Caco-2 (cell line): ENCODE measurements at regions of chr6 and their contacts with region 1.

Region 1: GRCh38 chr6:132300323-132300949 is 100.8 kb downstream of the MOXD1 start:
- DNase-seq: peak in 1 of 2 experiments; percentile 49
- H3K4me3 ChIP-seq: no peak overlapping the region
- H3K4me3 Mint-ChIP-seq: no peak overlapping the region
- H3K27ac Mint-ChIP-seq: no peak overlapping the region
- H3K4me1 ChIP-seq: no peaks in the 10 kb centered on the region
- H3K4me1 Mint-ChIP-seq: no peaks in the 10 kb centered on the region
- H3K27me3 ChIP-seq: no peaks in the 10 kb centered on the region
- H3K27me3 Mint-ChIP-seq: peaks cover 8% of the 10 kb centered on the region
- CTCF ChIP-seq: peak; percentile 42 to 59

Region 2: GRCh38 chr6:131914967-131915751 is 385.3 kb before region 1 on chr6:
- CTCF ChIA-PET with region 1: interaction called, 3 read pairs
- POLR2A ChIA-PET with region 1: no interaction called
- intact Hi-C with region 1: loop called (anchors 2 kb)
- DNase-seq: peak; percentile 42 to 57
- H3K4me3 ChIP-seq: no peak overlapping the region
- H3K4me3 Mint-ChIP-seq: no peak overlapping the region
- H3K27ac Mint-ChIP-seq: no peak overlapping the region
- H3K4me1 ChIP-seq: no peaks in the 10 kb centered on the region
- H3K4me1 Mint-ChIP-seq: no peaks in the 10 kb centered on the region
- H3K27me3 ChIP-seq: no peaks in the 10 kb centered on the region
- H3K27me3 Mint-ChIP-seq: peaks cover 7% of the 10 kb centered on the region
- CTCF ChIP-seq: peak; percentile 72 to 82

Region 3: DNA sequence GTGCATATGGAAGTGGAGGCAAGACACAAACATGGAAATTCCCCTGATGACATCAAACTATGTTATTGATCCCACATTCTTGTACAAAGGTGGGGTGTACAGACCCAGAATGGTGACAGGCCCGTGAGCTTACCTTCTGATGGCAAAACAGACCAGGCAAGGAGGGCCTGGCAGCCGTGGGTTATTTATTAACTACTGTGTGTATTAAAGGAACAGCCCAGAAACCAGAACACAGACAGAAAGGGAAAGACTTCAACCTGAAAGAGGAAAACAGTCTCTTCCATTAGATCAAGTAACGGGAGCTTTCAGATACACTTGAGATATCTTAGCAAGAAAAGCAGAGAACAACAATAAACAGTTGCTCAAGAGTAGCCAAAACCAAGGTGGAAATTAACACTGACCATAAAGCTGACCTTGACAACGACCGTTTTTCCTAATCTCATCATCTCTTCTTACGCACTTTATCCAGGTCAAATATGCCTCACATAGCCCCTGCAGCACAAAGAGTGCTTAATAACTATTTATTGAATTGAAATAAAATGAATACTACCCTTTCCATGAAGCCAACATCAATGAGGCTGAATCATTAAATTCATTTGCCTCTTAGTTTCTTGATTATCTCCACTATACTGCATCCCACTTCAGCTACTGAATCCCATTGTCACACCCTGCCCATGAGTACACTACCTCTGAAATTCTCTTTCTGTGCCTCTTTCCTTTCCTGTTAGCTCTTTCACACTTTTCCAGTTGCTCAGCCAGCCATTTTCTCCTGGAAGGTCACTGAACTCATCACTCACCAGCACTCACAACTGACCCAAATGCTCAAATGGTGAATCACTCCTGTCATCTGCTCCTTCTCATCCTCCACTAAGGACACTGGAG is 33.4 kb after region 1 on chr6:
- CTCF ChIA-PET with region 1: no interaction called
- POLR2A ChIA-PET with region 1: no interaction called
- intact Hi-C with region 1: loop called (anchors 1 kb)
- DNase-seq: peak; percentile 73
- H3K4me3 ChIP-seq: no peak overlapping the region
- H3K4me3 Mint-ChIP-seq: peak overlapping the region; percentile 65
- H3K27ac Mint-ChIP-seq: peak overlapping the region; percentile 63
- H3K4me1 ChIP-seq: peaks cover 20% of the 10 kb centered on the region
- H3K4me1 Mint-ChIP-seq: peaks cover 20% of the 10 kb centered on the region
- H3K27me3 ChIP-seq: no peaks in the 10 kb centered on the region
- H3K27me3 Mint-ChIP-seq: no peaks in the 10 kb centered on the region
- CTCF ChIP-seq: no peak

Region 4: GRCh38 chr6:132401120-132401945 is 100.9 kb after region 1 on chr6 and contains the start of gene MOXD1:
- CTCF ChIA-PET with region 1: no interaction called
- POLR2A ChIA-PET with region 1: no interaction called
- intact Hi-C with region 1: loop called (anchors 2 kb)
- DNase-seq: peak; percentile 40 to 64
- H3K4me3 ChIP-seq: peak within 1 kb of the TSS; percentile 78
- H3K4me3 Mint-ChIP-seq: peak within 1 kb of the TSS; percentile 71
- H3K27ac Mint-ChIP-seq: no peak within 1 kb of the TSS
- H3K4me1 ChIP-seq: no peaks in the 10 kb centered on the region
- H3K4me1 Mint-ChIP-seq: peaks cover 5% of the 10 kb centered on the region
- H3K27me3 ChIP-seq: peaks cover 2% of the 10 kb centered on the region
- H3K27me3 Mint-ChIP-seq: peaks cover 30% of the 10 kb centered on the region
- CTCF ChIP-seq: no peak
- total RNA-seq, gene MOXD1: 0.09 TPM in 1 of 2 replicates, not detected in the other

Region 5: DNA sequence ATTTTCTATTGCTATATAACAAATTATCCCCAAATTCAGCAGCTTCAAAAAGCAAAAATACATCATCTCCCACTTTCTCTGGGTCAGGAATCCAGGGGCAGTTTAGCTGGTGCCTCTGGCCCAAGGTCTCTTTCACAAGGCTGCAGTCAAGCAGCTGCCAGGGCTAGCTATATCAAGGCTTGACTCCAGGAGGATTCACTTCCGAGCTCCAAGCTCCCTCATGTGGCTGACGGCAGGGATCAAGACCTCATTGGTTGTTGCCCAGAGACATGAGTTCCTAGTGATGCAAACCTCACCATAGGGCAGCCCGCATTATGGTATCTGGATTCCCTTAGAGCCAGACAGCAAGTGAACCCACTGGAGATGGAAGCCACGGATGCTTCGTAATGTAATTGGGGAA is 414.8 kb after region 1 on chr6:
- CTCF ChIA-PET with region 1: no interaction called
- POLR2A ChIA-PET with region 1: no interaction called
- intact Hi-C with region 1: loop called (anchors 1 kb)
- DNase-seq: peak; percentile 73 to 81
- H3K4me3 ChIP-seq: no peak overlapping the region
- H3K4me3 Mint-ChIP-seq: no peak overlapping the region
- H3K27ac Mint-ChIP-seq: no peak overlapping the region
- H3K4me1 ChIP-seq: peaks cover 9% of the 10 kb centered on the region
- H3K4me1 Mint-ChIP-seq: no peaks in the 10 kb centered on the region
- H3K27me3 ChIP-seq: no peaks in the 10 kb centered on the region
- H3K27me3 Mint-ChIP-seq: no peaks in the 10 kb centered on the region
- CTCF ChIP-seq: peak; percentile 53 to 70